ENCODE measurements at regions of chr17 and their contacts with region 1.

Region 1: GRCh38 chr17:29807520-29808351 is 122.3 kb downstream of the SSH2 start:
- DNase-seq: peak in 1 of 2 experiments; percentile 72
- H3K4me3 ChIP-seq: no peak overlapping the region
- H3K27ac ChIP-seq: no peak overlapping the region
- H3K4me1 ChIP-seq: no peaks in the 10 kb centered on the region
- H3K27me3 ChIP-seq: no peaks in the 10 kb centered on the region
- CTCF ChIP-seq: peak in 2 of 3 experiments; percentile 64 to 72; a peak in 3 of 4 replicates
- EP300 ChIP-seq: no peak
- POLR2A ChIP-seq: no peak
- RAD21 ChIP-seq: peak; percentile 84 to 85

Region 2: DNA sequence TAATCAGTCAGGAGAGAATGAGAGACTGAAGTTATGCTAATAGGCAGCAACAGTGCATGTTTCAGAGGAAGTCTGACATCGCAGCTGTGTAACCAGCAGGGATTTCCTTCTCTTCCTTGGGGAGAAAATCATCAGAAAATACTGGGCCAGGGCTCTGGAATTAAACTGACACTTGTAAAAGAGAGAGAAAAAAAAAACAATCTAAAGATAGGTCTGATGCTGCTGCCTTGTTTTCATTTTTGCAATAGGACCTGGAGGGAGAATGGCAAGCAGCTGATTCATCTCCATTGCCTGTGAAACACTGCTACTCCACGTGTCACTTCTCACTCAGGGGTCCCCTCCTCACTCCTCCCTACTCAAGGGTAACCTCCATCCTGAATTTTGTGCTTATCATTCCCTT is 167.3 kb before region 1 on chr17:
- CTCF ChIA-PET with region 1: interaction called, 15 read pairs
- POLR2A ChIA-PET with region 1: no interaction called
- DNase-seq: no peak
- H3K4me3 ChIP-seq: no peak overlapping the region
- H3K27ac ChIP-seq: no peak overlapping the region
- H3K4me1 ChIP-seq: peaks cover 0 to 10% (median 3%) of the 10 kb centered on the region in 4 experiments; a peak in 3 of 7 replicates
- H3K27me3 ChIP-seq: no peaks in the 10 kb centered on the region
- CTCF ChIP-seq: no peak
- EP300 ChIP-seq: no peak
- POLR2A ChIP-seq: no peak
- RAD21 ChIP-seq: no peak

Region 3: GRCh38 chr17:29766796-29767327 is 40.9 kb before region 1 on chr17:
- CTCF ChIA-PET with region 1: no interaction called
- POLR2A ChIA-PET with region 1: no interaction called
- DNase-seq: no peak
- H3K4me3 ChIP-seq: no peak overlapping the region
- H3K27ac ChIP-seq: no peak overlapping the region
- H3K4me1 ChIP-seq: no peaks in the 10 kb centered on the region; a peak in 1 of 7 replicates
- H3K27me3 ChIP-seq: no peaks in the 10 kb centered on the region; a peak in 1 of 7 replicates
- CTCF ChIP-seq: no peak
- EP300 ChIP-seq: no peak
- POLR2A ChIP-seq: no peak
- RAD21 ChIP-seq: no peak

Region 4: DNA sequence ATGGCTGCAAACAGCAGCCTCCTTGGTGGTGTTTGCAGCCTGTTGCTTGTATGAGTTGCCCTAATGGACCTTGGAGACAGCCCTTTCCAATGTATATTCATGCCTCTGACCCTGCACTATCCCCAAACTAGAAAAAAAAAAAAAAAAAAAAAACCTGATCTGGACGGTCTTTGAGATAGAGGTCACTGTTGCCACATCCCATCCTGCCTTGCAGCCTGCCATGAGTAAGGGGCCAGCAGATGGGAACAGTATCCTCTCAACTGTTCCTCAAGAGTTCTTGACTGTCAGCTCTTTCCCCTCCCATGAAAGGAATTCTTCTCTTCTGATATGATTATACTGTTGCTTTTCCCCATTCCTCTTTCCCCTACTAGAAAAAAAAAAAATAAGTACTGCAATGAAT is 30.1 kb before region 1 on chr17:
- CTCF ChIA-PET with region 1: interaction called, 10 read pairs
- POLR2A ChIA-PET with region 1: no interaction called
- DNase-seq: no peak
- H3K4me3 ChIP-seq: no peak overlapping the region
- H3K27ac ChIP-seq: no peak overlapping the region
- H3K4me1 ChIP-seq: no peaks in the 10 kb centered on the region
- H3K27me3 ChIP-seq: no peaks in the 10 kb centered on the region
- CTCF ChIP-seq: no peak
- EP300 ChIP-seq: no peak
- POLR2A ChIP-seq: no peak
- RAD21 ChIP-seq: no peak

Region 5: DNA sequence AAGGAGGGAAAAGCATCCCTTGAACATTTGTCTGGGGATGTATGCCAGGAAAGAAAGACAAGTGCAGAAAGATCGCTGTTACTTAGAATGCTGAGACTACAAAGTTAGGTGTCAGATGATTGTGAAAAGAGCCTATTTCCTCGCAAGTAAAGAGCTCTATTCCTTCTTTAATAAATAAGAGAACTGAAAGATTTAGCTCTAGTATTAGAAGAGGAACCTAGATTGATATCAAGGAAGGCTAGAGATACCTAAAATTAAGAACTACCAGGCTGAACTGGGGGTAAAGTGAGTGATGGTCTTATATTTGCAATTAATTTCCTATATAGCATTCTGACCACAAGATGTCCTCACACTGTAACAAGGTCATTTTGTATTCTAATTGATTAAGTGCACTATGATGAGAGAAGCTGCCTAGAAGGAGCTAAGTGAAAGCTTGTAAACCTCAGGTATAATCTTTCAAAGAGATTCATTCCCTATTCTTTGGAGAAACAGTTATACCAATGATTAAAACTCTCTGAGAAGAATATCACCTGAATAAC is 60.0 kb after region 1 on chr17:
- CTCF ChIA-PET with region 1: interaction called, 14 read pairs
- POLR2A ChIA-PET with region 1: no interaction called
- DNase-seq: no peak
- H3K4me3 ChIP-seq: no peak overlapping the region
- H3K27ac ChIP-seq: no peak overlapping the region
- H3K4me1 ChIP-seq: peaks cover 0 to 6% (median 3%) of the 10 kb centered on the region in 4 experiments; a peak in 6 of 7 replicates
- H3K27me3 ChIP-seq: no peaks in the 10 kb centered on the region
- CTCF ChIP-seq: peak in 2 of 3 experiments; percentile 9 to 10; a peak in 2 of 4 replicates
- EP300 ChIP-seq: no peak
- POLR2A ChIP-seq: no peak
- RAD21 ChIP-seq: peak in 1 of 2 experiments; percentile 24; a peak in 2 of 4 replicates